GM10248 (cell line): ENCODE measurements at regions of chr1 and their contacts with region 1.

Region 1: GRCh38 chr1:110495926-110496600 is 22.9 kb downstream of the KCNA10 start:
- DNase-seq: peak; percentile 83
- CTCF ChIP-seq: peak; percentile 94

Region 2: DNA sequence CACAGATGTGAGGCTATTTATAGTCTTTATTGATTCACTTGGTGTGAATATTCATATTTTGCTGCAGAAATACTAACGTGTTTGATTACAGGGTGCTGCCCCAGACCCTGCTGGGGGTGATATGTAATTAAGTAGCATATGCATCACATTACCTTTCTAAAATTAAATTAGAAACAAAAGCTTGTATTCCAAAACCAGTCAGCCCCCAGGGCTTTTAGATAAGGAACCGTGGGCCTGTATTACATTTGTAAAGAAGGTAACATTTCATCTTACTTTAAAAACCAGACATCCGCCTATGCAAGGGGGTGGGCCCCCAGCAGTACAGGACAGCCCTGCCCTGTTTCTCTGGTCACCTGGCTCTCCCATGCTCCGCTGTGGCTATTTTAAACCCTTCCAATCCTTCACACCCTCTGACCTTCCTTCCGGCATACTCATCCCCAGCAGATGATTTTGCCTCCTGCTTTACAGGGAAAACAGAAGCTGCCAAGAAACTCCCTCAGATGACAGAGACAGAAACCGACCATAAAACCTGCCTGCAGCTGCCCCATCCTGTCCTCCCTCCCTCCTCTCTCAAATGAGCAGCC is 307.9 kb before region 1 on chr1:
- CTCF ChIA-PET with region 1: interaction called, 70 read pairs
- POLR2A ChIA-PET with region 1: no interaction called
- DNase-seq: no peak
- CTCF ChIP-seq: no peak

Region 3: DNA sequence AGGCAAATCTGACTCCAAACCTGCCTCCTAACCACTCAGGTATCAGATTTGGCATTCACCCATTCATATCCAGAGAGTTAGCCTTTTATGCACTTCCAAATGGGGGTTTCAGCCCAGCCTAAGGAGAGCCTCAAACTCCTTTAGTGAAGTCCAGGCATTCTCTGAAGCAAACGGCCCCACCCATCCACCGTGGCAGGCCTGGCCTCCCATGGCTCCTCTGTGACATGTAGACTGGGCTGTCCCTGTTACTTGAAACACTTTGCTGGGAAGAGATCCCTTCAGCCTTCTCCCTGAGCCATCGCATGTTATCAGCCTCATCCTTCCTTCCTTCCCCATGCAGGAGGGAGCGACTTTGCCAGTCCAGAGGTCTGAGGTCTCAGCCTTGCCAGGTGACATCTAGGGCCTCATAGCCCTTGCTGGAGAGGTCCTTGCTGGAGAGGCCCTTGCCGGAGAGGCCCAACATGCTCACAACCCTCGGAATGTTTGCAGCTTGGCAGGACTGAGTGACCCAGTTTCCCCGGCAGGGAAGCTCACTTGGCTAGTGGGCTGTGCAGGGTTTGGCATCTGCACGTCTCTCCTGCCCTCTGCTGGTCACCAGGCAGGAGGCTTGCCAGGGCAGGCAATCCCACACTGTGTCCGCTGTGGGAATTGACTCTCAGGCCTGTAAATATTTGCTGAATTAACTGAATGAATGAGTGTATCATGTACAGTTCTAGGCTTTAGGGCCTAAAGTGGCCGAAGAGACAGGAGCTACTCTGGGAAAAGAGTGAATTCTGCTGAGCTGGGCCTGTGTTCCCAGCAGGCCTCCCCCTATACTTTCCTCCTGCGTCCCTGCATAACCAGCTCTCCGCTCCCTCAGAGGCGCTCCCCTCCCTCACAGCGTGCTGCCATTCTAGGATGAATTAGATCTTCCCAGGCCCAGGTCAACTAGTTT is 183.6 kb before region 1 on chr1:
- CTCF ChIA-PET with region 1: interaction called, 13 read pairs
- POLR2A ChIA-PET with region 1: no interaction called
- DNase-seq: peak; percentile 71
- CTCF ChIP-seq: peak; percentile 91

Region 4: DNA sequence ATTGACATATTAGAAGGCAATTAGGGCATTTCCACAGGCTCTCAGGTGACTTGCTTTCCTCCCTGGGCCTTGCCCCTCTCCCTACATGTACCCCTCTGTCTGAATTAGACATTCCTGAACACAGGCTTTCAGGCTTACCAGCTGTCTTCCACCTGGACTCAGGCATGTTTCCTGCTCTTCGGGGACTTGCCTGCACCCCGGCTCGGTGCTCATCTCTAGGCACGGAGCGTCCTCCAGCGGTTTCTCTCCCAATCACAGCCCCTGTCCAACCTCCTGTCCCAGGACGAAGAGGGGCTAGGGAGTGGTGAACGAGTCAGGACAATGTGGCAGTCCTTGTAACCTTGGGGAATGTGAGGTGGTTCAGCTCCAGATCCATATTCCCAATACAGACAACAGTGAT is 40.9 kb before region 1 on chr1:
- CTCF ChIA-PET with region 1: interaction called, 39 read pairs
- POLR2A ChIA-PET with region 1: no interaction called
- DNase-seq: no peak
- CTCF ChIP-seq: no peak

Region 5: DNA sequence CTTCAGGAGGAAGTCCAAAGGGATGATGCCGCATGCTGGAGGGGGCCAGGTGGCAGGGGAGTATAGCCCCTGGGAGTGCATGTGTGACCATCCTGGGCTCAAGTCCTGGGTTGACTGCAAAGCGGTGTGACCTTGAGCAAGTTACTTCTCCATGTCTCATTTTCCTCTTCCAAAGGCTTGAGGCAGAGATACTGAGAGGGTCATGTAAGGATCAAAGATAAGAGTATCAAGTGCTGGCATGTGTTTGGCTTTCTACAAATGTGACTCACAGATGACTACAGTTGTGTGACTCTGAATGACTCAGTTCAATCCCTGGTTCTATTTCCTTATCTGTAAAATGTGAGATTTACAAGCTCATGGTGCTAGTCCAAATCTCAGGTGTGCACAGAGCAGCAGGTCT is 19.0 kb before region 1 on chr1:
- CTCF ChIA-PET with region 1: interaction called, 31 read pairs
- POLR2A ChIA-PET with region 1: no interaction called
- DNase-seq: no peak
- CTCF ChIP-seq: no peak

Region 6: GRCh38 chr1:110513511-110513910 is 17.4 kb after region 1 on chr1:
- CTCF ChIA-PET with region 1: interaction called, 35 read pairs
- POLR2A ChIA-PET with region 1: no interaction called
- DNase-seq: no peak
- CTCF ChIP-seq: no peak

Region 7: GRCh38 chr1:110948038-110948810 is 452.2 kb after region 1 on chr1:
- CTCF ChIA-PET with region 1: no interaction called
- POLR2A ChIA-PET with region 1: no interaction called
- DNase-seq: no peak
- CTCF ChIP-seq: no peak